MCF 10A (cell line): ENCODE measurements at regions of chr13 and their contacts with region 1.

Region 1: GRCh38 chr13:98484289-98485219 is 92.4 kb downstream of the STK24 start:
- DNase-seq: peak; percentile 99
- H3K4me3 Mint-ChIP-seq: peak overlapping the region; percentile 68
- H3K27ac Mint-ChIP-seq: peak overlapping the region; percentile 94
- H3K4me1 Mint-ChIP-seq: peaks cover 47% of the 10 kb centered on the region
- H3K27me3 Mint-ChIP-seq: no peaks in the 10 kb centered on the region
- CTCF ChIP-seq: no peak

Region 2: DNA sequence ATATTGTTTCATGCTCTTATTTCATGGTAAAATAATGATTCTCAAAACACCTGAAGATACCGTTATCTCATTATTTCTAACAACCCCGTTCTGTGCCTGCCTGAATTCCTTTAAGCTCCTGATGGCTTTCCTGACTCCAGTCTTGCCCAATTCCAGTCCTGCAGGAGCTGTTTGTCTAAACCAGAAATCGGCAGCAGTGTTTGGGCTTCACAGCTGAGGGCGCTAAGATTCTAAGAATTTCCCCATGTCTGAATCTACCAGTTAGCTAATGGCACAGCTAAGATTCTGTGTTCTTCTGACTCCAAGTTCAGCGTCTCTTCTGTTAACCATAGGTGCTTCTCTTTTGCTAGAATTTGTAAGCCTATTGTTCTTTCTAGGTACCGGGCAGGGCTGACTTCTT is 139.4 kb before region 1 on chr13:
- CTCF ChIA-PET with region 1: no interaction called
- POLR2A ChIA-PET with region 1: no interaction called
- intact Hi-C with region 1: no loop called
- DNase-seq: no peak
- H3K4me3 Mint-ChIP-seq: no peak overlapping the region
- H3K27ac Mint-ChIP-seq: no peak overlapping the region
- H3K4me1 Mint-ChIP-seq: no peaks in the 10 kb centered on the region
- H3K27me3 Mint-ChIP-seq: no peaks in the 10 kb centered on the region
- CTCF ChIP-seq: no peak

Region 3: DNA sequence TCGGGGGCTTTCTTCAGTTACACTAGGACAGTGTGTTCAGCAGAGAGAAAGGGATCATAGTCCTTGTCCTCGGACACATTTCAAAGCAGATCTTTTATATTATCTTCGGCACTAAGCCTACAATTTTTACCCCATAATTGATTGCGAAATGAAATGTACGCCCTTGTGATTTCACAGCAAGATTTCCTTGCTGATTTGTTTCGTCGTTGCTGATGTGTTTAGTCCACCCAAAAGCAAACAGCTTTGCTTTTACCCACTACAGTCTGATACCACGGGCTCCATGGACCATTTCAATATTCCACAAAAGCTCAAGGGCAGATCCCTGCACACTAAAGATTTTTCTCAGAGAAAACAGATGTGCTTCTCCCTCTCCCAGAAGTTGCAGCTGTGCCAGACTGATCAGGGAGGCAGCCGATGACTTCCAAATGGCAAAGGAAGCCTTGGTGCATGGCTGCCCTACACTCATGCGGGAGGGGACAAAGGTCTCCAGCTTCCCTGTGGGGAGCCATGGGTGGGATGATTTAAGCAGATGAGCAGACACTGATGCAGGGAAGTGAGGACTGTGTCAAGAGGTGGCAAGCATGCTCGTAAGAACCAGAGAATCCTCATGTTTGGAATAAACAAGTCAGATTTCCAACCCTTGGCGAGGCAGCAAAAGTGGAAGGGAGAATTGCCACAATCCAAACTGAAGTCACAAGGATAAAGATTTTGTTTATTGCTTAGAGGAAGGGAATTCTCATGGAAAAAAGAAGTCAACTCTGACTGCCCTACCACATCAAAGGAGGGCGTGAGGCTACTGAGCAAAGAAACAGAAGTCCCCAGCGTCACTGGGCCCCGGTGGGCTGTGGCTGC is 11.3 kb after region 1 on chr13:
- CTCF ChIA-PET with region 1: interaction called, 10 read pairs
- POLR2A ChIA-PET with region 1: interaction called, 13 read pairs
- intact Hi-C with region 1: no loop called
- DNase-seq: peak; percentile 14
- H3K4me3 Mint-ChIP-seq: no peak overlapping the region
- H3K27ac Mint-ChIP-seq: no peak overlapping the region
- H3K4me1 Mint-ChIP-seq: peaks cover 36% of the 10 kb centered on the region
- H3K27me3 Mint-ChIP-seq: no peaks in the 10 kb centered on the region
- CTCF ChIP-seq: no peak

Region 4: GRCh38 chr13:98504371-98504963 is 19.9 kb after region 1 on chr13:
- CTCF ChIA-PET with region 1: interaction called, 10 read pairs
- POLR2A ChIA-PET with region 1: interaction called, 79 read pairs
- intact Hi-C with region 1: loop called (anchors 1 kb)
- DNase-seq: no peak
- H3K4me3 Mint-ChIP-seq: no peak overlapping the region
- H3K27ac Mint-ChIP-seq: no peak overlapping the region
- H3K4me1 Mint-ChIP-seq: peaks cover 48% of the 10 kb centered on the region
- H3K27me3 Mint-ChIP-seq: no peaks in the 10 kb centered on the region
- CTCF ChIP-seq: no peak

Region 5: DNA sequence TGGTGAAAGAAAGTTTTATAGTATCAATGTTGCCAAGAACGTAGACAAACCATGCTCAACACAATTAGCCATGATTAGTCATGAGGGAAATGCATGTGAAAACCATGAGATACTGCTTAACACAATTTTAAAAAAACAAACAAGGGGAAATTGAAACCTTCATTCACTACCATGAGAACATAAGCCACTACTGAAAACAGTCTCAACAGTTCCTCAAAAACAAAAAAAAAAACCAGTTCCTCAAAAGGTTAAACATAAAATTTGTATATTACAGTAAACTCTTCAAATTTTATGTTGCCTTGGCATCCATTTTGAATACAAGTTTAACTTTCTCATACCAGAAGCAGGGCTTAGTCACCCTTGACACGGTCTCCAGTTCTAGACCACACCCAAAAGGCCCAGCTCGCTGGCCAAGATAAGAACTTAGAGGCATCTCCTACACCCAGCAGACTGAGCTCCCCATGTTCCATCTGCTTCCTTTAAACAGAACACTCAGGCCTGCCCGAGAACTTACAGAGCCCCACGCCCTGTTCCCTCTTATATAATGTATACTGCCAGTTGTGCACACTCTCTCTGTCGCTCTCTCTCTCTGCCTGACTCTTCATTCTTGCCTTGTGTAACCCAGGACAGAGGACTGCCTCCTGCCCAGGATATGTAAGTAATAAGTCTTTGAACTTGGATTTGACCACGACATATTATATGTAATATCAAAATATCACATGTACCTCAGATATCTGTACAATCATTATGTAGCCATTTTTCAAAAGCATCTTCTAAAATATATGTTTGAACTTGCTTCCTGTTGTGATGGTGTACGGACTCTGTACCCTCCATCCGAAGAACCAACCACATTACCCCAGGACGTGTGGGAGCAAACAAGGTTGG is 25.0 kb after region 1 on chr13:
- CTCF ChIA-PET with region 1: interaction called, 10 read pairs
- POLR2A ChIA-PET with region 1: interaction called, 79 read pairs
- intact Hi-C with region 1: loop called (anchors 1 kb)
- DNase-seq: peak; percentile 87
- H3K4me3 Mint-ChIP-seq: peak overlapping the region; percentile 12
- H3K27ac Mint-ChIP-seq: peak overlapping the region; percentile 87
- H3K4me1 Mint-ChIP-seq: peaks cover 56% of the 10 kb centered on the region
- H3K27me3 Mint-ChIP-seq: no peaks in the 10 kb centered on the region
- CTCF ChIP-seq: no peak

Region 6: DNA sequence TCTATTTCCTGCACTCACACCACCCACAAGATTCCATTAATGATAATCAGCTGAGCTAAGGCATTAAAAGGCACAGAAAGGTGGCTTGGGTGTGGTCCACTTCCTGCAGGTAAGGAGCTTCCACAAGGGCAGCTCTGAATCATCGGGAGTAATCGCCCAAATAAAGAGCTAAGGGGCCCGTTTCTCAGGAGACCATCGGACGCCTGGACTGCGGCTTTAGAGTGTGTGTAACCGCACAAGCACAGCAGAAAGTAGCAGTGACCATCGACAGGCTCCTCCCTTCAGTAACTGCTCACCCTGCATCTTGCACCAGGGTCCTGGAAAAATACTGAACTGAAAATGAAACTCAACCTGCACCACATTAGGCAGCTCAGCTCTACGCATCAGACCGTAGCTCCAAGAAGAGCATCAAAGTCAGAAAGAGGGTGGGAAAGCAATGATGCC is 86.4 kb after region 1 on chr13:
- CTCF ChIA-PET with region 1: interaction called, 5 read pairs
- POLR2A ChIA-PET with region 1: interaction called, 51 read pairs
- intact Hi-C with region 1: loop called (anchors 1 kb)
- DNase-seq: peak; percentile 69
- H3K4me3 Mint-ChIP-seq: peak overlapping the region; percentile 68
- H3K27ac Mint-ChIP-seq: peak overlapping the region; percentile 76
- H3K4me1 Mint-ChIP-seq: peaks cover 64% of the 10 kb centered on the region
- H3K27me3 Mint-ChIP-seq: no peaks in the 10 kb centered on the region
- CTCF ChIP-seq: no peak

Region 7: DNA sequence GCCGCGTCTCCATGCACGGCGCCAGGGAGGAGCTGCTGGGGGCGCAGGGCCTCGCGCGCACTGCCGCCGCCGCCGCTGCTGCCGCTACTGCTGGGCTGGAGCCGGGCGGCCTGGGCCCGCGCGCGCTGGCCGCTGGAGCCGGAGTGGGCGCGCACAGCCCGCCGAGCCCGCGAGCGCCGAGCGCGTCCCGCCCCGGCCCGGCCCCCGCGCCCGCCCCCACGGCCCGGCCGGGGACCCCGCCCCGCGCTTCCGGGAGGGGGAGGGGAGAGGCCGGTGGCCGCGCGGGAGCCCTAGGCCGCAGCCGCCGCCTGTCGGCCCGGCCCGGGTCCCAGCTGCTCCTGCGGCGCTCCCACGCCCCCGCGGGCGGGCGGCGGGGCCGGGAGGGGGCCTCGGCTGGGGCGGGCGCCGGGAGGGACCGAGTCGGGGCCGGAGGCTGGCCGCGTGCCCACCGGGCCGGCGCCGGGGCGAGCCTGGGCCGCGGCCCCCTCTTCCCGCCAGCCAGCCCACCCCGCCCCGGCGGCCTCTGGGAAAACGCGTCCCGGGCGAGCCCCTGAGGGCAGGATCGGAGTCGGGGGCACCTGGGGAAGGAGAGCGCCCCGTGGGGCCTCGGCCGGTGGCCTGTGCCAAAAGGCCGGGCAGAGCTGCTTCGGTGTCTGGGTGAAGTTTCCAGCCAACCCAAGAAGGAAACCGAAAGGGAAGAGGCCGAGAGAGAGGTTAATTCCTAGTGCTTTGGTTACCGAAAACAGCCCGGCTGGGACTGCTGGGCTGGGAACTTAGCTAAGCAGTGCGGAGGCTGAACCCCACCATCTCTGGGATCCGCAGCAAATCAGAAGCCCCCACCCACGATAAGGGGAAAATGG is 92.6 kb after region 1 on chr13 and contains the start of gene STK24:
- CTCF ChIA-PET with region 1: interaction called, 4 read pairs
- POLR2A ChIA-PET with region 1: interaction called, 51 read pairs
- intact Hi-C with region 1: loop called (anchors 1 kb)
- DNase-seq: peak; percentile 67
- H3K4me3 Mint-ChIP-seq: peak within 1 kb of the TSS; percentile 82
- H3K27ac Mint-ChIP-seq: peak within 1 kb of the TSS; percentile 83
- H3K4me1 Mint-ChIP-seq: peaks cover 22% of the 10 kb centered on the region
- H3K27me3 Mint-ChIP-seq: no peaks in the 10 kb centered on the region
- CTCF ChIP-seq: no peak
- total RNA-seq, gene STK24: 200 and 215 TPM in 2 replicates